ENCODE measurements at regions of chr12 and their contacts with region 1.

Region 1: GRCh38 chr12:48157018-48157888 is at the start of gene ASB8:
- DNase-seq: peak; percentile 97
- CTCF ChIP-seq: peak; percentile 25

Region 2: GRCh38 chr12:47705566-47706425 is 451.5 kb before region 1 on chr12 and contains the start of gene RPAP3:
- in situ Hi-C with region 1: loop called (anchors 25 kb)
- DNase-seq: peak; percentile 94
- CTCF ChIP-seq: peak; percentile 50

Region 3: DNA sequence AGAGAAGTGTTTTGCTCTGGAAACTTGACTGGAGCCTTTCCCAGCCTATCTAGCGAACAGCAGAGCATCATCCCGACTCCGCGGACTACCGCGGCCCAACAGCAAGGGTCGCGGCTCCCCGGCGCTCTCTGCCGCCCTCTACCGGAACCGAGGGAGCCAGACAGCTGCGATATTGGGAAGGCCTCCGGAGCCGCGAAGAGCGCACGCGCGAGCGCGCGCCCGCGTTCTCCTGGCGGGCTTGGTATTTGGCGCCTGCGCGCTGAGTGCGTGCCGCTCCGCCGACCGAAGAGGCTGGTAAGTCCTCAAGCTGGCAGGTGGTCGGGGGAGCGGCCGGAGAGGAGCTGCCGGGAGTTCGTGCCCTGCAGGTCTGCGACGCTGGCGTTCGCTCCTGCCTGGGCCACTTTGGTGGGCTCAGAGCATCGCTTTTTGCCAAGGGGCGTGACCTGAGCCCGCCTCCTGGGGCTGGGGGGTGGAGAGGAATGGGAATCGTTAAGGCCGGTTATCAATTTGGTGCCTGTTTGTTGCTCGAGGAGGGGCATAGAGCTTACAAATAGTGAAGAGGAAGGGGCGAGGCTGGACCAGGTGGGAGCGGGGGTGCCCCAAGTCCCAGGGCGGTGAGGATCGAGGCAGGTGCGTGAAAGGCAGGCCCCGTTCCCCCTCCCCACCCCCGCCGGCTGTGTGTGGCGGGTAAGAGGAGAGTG is 193.8 kb before region 1 on chr12 and contains the start of gene TMEM106C:
- in situ Hi-C with region 1: loop called (anchors 25 kb)
- DNase-seq: peak; percentile 100
- CTCF ChIP-seq: peak; percentile 96

Region 4: GRCh38 chr12:48795480-48796455 is 638.5 kb after region 1 on chr12:
- in situ Hi-C with region 1: no loop called
- DNase-seq: peak; percentile 81
- CTCF ChIP-seq: peak; percentile 79